Activated CD4-positive, alpha-beta memory T cell treated with anti-CD3 and anti-CD28 coated beads for 36 hours (primary cell): ENCODE measurements at regions of chrX and their contacts with region 1.

Region 1: GRCh38 chrX:110188756-110189558 is 128.9 kb downstream of the AMMECR1 start:
- DNase-seq: no peak
- H3K4me3 Mint-ChIP-seq: no peak overlapping the region
- H3K27ac Mint-ChIP-seq: peak overlapping the region; percentile 62
- H3K4me1 Mint-ChIP-seq: peaks cover 23% of the 10 kb centered on the region
- H3K27me3 Mint-ChIP-seq: no peaks in the 10 kb centered on the region

Region 2: GRCh38 chrX:110204986-110205385 is 16.0 kb after region 1 on chrX:
- CTCF ChIA-PET with region 1: no interaction called
- POLR2A ChIA-PET with region 1: interaction called, 3 read pairs
- intact Hi-C with region 1: loop called (anchors 1 kb)
- DNase-seq: peak; percentile 13
- H3K4me3 Mint-ChIP-seq: no peak overlapping the region
- H3K27ac Mint-ChIP-seq: no peak overlapping the region
- H3K4me1 Mint-ChIP-seq: peaks cover 28% of the 10 kb centered on the region
- H3K27me3 Mint-ChIP-seq: no peaks in the 10 kb centered on the region

Region 3: GRCh38 chrX:110286136-110286535 is 97.2 kb after region 1 on chrX:
- CTCF ChIA-PET with region 1: no interaction called
- POLR2A ChIA-PET with region 1: no interaction called
- intact Hi-C with region 1: no loop called
- DNase-seq: no peak
- H3K4me3 Mint-ChIP-seq: no peak overlapping the region
- H3K27ac Mint-ChIP-seq: no peak overlapping the region
- H3K4me1 Mint-ChIP-seq: peaks cover 50% of the 10 kb centered on the region
- H3K27me3 Mint-ChIP-seq: no peaks in the 10 kb centered on the region